Pancreas (tissue), 10 donors: ENCODE measurements at regions of chr19 and their contacts with region 1.

Region 1: DNA sequence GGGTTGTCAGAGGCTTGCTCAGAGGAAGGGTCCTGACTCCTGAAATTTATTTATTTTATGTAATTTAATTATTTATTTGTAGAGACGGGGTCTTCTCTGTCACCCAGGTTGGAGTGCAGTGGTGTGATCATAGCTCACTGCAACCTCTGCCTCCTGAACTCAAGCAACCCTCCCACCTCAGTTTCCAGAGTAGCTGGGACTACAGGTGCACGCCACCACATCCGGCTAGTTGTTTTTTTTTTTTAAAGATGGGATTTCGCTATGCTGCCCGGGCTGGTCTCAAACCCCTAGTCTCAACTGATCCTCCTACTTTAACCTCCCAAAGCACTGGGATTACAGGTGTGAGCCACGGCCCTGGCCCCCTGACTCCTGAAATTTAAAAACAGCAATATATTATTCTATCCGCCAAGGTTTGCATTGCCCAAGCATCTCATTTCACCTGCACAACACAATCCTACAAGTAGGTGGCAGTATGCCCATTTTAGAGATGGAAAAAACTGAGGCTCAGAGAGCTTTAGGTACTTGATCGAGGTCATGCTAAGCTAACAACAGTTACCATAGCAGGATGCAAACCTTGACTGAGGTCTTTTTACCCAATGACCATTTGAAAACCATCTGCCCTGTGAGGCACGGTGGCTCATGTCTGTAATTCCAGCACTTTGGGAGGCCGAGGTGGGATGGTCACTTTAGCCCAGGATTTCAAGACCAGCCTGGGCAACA is 18.1 kb downstream of the ARHGEF18 start:
- DNase-seq: peak in 1 of 6 donors; percentile 6
- ATAC-seq: peak in 2 of 4 donors; percentile 53 to 69
- H3K4me3 ChIP-seq: no peak overlapping the region
- H3K27ac ChIP-seq: no peak overlapping the region
- H3K4me1 ChIP-seq: no peaks in the 10 kb centered on the region
- H3K27me3 ChIP-seq: no peaks in the 10 kb centered on the region
- CTCF ChIP-seq: peak in 1 of 4 donors; percentile 18

Region 2: GRCh38 chr19:7304200-7304599 is 62.7 kb before region 1 on chr19:
- intact Hi-C with region 1: no loop called
- DNase-seq: no peak
- ATAC-seq: no peak
- H3K4me3 ChIP-seq: no peak overlapping the region
- H3K27ac ChIP-seq: no peak overlapping the region
- H3K4me1 ChIP-seq: no peaks in the 10 kb centered on the region
- H3K27me3 ChIP-seq: no peaks in the 10 kb centered on the region
- CTCF ChIP-seq: no peak

Region 3: GRCh38 chr19:7540761-7541491 is 174.1 kb after region 1 on chr19:
- intact Hi-C with region 1: loop called in 1 of 3 experiments (anchors 10 kb)
- DNase-seq: peak in 1 of 6 donors; percentile 30
- ATAC-seq: no peak
- H3K4me3 ChIP-seq: no peak overlapping the region
- H3K27ac ChIP-seq: no peak overlapping the region
- H3K4me1 ChIP-seq: peaks cover 0 to 5% (median 0%) of the 10 kb centered on the region in 3 donors
- H3K27me3 ChIP-seq: no peaks in the 10 kb centered on the region
- CTCF ChIP-seq: no peak